Panc1 (cell line): ENCODE measurements at regions of chr18 and their contacts with region 1.

Region 1: DNA sequence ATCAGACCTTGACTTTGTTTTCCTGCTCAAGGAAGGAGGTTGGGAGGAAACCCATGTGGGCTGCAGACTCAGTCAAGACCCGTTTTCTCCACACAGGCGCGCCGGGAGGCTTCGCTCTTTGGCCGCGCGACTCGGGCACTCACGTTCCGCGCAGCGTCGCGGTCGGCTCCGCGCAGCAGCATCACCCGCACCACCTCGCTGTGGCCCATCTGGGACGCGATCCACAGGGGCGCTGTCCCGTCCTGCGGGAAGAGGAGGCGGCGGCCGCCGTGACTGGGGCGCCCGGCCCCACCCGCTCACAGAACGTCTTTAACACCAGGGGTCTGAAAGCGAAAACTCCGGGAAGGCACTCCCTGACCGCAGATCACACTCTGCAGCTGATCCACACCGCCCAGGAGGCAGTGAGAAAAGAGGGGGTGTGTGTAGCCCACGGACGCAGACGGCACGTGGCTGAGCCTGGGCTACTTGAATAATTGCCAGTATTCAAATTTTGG is 33.1 kb upstream of the NPC1 start:
- DNase-seq: no peak
- ATAC-seq: peak; percentile 60
- H3K4me3 ChIP-seq: peak overlapping the region; percentile 30 to 53
- H3K27ac ChIP-seq: no peak overlapping the region
- H3K4me1 ChIP-seq: peaks cover 13% of the 10 kb centered on the region
- H3K27me3 ChIP-seq: no peaks in the 10 kb centered on the region; the same call in 1 of the 2 replicates
- CTCF ChIP-seq: no peak

Region 2: GRCh38 chr18:23667114-23667513 is 47.7 kb after region 1 on chr18:
- CTCF ChIA-PET with region 1: no interaction called
- POLR2A ChIA-PET with region 1: no interaction called
- in situ Hi-C with region 1: no loop called
- intact Hi-C with region 1: loop called (anchors 1 kb)
- DNase-seq: no peak
- ATAC-seq: no peak
- H3K4me3 ChIP-seq: no peak overlapping the region
- H3K27ac ChIP-seq: no peak overlapping the region
- H3K4me1 ChIP-seq: peaks cover 5% of the 10 kb centered on the region
- H3K27me3 ChIP-seq: peaks cover 12% of the 10 kb centered on the region
- CTCF ChIP-seq: peak; percentile 40; the same call in 1 of the 2 replicates

Region 3: DNA sequence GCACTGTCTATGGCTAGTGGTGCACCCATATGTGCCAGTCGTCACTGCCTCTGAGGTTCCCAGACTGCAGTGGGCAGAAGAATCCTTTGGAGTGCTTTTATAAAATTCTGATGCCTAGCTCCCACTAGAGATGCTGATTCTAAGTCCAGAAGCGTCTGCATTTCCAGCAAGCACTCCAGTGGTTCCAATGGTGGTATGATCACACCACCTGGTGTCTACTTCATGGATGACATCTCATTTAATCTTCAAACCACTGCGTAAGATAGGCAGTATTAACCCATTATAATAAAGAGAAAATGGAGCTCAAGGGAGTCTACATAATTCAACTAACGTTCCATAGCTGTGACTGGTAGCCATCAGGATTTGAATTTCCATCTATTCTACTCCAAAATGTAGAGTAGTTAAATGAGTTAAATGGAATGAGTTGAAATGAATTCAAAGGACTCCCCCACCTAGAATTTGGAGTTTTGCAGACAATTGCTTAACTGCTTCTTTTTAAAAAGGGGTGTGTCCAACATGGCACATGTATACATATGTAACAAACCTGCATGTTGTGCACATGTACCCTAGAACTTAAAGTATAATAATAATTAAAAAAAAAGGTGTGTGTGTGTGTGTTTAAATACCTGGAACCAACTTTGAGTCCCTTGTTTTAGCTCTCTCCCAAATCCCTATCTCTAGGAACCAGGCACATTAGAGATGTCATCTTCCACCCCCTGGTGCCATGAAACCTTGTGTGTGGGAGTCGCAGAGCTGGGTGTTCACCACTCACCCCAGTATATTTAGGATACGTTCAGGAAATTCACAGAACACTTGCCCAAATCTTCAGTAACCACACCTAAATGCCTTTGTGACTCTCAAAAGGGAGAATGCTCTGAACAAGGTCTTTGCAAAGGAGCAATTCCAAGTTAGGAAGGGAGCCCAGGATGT is 83.9 kb after region 1 on chr18:
- CTCF ChIA-PET with region 1: interaction called, 18 read pairs
- POLR2A ChIA-PET with region 1: no interaction called
- in situ Hi-C with region 1: no loop called
- intact Hi-C with region 1: loop called (anchors 2 kb)
- DNase-seq: peak; percentile 50
- ATAC-seq: peak; percentile 95
- H3K4me3 ChIP-seq: no peak overlapping the region
- H3K27ac ChIP-seq: no peak overlapping the region
- H3K4me1 ChIP-seq: no peaks in the 10 kb centered on the region
- H3K27me3 ChIP-seq: no peaks in the 10 kb centered on the region; the same call in 1 of the 2 replicates
- CTCF ChIP-seq: peak; percentile 76

Region 4: GRCh38 chr18:23812546-23813440 is 193.4 kb after region 1 on chr18:
- CTCF ChIA-PET with region 1: interaction called, 3 read pairs
- POLR2A ChIA-PET with region 1: no interaction called
- in situ Hi-C with region 1: no loop called
- intact Hi-C with region 1: loop called (anchors 5 kb)
- DNase-seq: no peak
- ATAC-seq: no peak
- H3K4me3 ChIP-seq: no peak overlapping the region
- H3K27ac ChIP-seq: no peak overlapping the region
- H3K4me1 ChIP-seq: no peaks in the 10 kb centered on the region
- H3K27me3 ChIP-seq: no peaks in the 10 kb centered on the region
- CTCF ChIP-seq: peak; percentile 70; the same call in 1 of the 2 replicates